Posterior vena cava (tissue), 2 donors: ENCODE measurements at regions of chr5 and their contacts with region 1.

Region 1: GRCh38 chr5:122076664-122077365 is 1.2 kb downstream of the LOX start:
- DNase-seq: peak; percentile 94

Region 2: DNA sequence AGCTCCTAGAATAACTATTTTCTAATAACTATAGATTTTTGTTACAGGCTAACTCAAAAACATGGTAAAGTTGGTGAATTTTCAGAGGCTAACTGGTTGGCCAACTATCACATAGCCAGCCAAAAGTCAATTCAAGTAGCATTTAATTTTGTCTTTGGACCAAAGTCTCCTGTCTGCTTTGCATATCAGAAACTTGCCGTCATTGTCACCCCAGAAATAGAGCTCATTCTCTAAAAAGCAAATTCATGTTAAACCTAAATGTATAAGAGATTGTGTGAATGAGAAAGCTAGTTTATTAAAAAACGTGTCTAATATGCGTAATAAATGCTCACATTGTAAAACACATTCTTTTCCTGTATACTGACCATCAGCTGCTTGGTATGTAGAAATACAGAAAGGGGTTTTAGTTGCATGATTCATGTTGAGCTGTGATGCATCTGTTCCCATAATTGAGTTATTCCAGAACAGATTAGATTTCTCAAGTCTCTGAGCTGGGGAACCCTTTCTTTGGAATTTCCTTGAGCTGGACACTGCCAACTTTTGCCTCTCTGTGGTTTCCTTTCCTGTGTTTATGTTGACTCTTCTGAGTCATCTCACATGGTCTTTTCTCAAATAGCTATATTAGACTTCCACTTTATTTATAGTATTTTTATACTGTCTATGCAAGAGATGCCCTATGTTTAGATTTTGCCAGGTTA is 107.8 kb before region 1 on chr5:
- intact Hi-C with region 1: loop called in 1 of 2 experiments (anchors 10 kb)
- DNase-seq: no peak

Region 3: GRCh38 chr5:122126177-122126755 is 49.5 kb after region 1 on chr5:
- intact Hi-C with region 1: no loop called
- DNase-seq: no peak

Region 4: DNA sequence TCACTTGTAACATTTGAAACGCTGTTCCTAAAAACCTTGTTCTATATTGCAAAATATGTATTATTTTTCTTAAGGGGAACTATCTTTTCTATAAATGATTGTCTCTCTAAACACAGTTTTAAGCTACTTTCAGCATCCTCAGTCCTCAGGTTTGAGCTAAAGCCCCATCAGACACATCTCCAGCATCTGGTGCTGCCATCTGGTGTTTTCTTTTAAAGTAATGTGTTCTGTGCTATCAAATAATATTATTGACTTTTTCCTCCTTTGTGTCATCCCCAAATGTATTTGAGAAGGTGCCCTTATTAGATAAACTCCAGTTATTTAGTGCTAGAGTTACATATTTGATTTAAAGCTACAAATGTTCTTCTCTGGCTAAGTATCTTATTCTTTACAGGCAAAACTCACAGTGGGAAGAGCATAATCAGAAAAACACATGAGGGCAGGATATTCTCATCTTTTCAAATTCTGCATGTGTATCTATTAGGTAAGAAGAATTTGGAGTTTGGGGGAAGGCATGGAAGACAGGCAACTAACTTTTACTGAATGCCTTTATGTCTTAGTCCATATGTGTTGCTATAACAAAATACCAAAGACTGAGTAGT is 80.0 kb after region 1 on chr5:
- intact Hi-C with region 1: loop called in 1 of 2 experiments (anchors 5 kb)
- DNase-seq: no peak